Aorta (tissue), 5 donors: ENCODE measurements at regions of chr11 and their contacts with region 1.

Region 1: GRCh38 chr11:32176223-32176934 is 85.5 kb downstream of the RCN1 start:
- DNase-seq: peak; percentile 61 to 83
- ATAC-seq: peak; percentile 76
- H3K4me3 ChIP-seq: no peak overlapping the region
- H3K27ac ChIP-seq: no peak overlapping the region
- H3K4me1 ChIP-seq: no peaks in the 10 kb centered on the region
- H3K27me3 ChIP-seq: no peaks in the 10 kb centered on the region

Region 2: DNA sequence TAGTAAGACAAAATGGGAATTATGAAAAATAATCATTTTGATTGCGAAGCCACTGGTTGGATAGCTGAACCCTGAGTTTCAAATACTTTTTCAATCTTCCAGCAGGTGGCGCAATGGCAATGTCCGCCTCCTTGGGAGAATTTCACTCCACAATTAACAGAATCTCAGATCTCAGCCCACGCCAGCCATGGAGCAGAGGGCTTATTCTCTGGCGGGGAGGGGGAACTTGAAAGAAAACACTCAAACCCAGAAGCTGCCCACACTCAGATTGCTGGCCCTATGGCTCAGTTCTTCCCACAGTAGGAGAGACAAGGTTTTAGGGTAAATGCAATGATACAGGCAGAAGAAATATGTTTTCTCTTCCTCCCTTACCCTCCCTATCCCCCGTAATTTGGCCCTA is 124.2 kb before region 1 on chr11:
- intact Hi-C with region 1: loop called (anchors 1 kb)
- DNase-seq: peak; percentile 54 to 76
- ATAC-seq: no peak
- H3K4me3 ChIP-seq: no peak overlapping the region
- H3K27ac ChIP-seq: no peak overlapping the region
- H3K4me1 ChIP-seq: no peaks in the 10 kb centered on the region
- H3K27me3 ChIP-seq: no peaks in the 10 kb centered on the region

Region 3: DNA sequence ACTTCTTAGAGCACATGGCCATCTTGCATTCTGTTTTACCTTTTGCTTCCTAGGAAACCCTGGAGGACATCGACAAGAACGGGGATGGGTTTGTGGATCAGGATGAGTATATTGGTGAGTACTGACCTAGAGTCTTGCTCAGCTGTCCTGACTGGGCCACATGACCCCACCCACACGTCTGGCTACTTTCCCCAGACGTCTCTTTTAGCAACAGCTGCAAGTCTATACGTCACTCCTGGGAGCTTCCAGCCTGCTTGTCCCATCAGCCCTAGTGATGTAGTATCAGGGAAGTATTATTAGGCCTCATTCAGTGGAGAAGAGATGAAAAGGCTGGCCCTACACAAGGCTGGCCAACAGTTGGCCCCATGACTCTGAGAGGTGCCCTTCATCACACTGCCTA is 75.9 kb before region 1 on chr11:
- intact Hi-C with region 1: loop called in 1 of 2 experiments (anchors 2 kb)
- DNase-seq: no peak
- ATAC-seq: no peak
- H3K4me3 ChIP-seq: no peak overlapping the region
- H3K27ac ChIP-seq: no peak overlapping the region
- H3K4me1 ChIP-seq: no peaks in the 10 kb centered on the region
- H3K27me3 ChIP-seq: no peaks in the 10 kb centered on the region

Region 4: GRCh38 chr11:32353870-32354269 is 177.5 kb after region 1 on chr11:
- intact Hi-C with region 1: no loop called
- DNase-seq: no peak
- ATAC-seq: no peak
- H3K4me3 ChIP-seq: no peak overlapping the region
- H3K27ac ChIP-seq: no peak overlapping the region
- H3K4me1 ChIP-seq: no peaks in the 10 kb centered on the region
- H3K27me3 ChIP-seq: peaks cover 0 to 4% of the 10 kb centered on the region in 2 donors